Brain microvascular endothelial cell (primary cell): ENCODE measurements at regions of chr2 and their contacts with region 1.

Region 1: GRCh38 chr2:20097879-20098714 is 46.7 kb upstream of the LAPTM4A start:
- DNase-seq: peak; percentile 76
- H3K4me3 ChIP-seq: no peak overlapping the region
- H3K27ac ChIP-seq: no peak overlapping the region
- H3K27me3 ChIP-seq: no peaks in the 10 kb centered on the region
- CTCF ChIP-seq: peak; percentile 90

Region 2: DNA sequence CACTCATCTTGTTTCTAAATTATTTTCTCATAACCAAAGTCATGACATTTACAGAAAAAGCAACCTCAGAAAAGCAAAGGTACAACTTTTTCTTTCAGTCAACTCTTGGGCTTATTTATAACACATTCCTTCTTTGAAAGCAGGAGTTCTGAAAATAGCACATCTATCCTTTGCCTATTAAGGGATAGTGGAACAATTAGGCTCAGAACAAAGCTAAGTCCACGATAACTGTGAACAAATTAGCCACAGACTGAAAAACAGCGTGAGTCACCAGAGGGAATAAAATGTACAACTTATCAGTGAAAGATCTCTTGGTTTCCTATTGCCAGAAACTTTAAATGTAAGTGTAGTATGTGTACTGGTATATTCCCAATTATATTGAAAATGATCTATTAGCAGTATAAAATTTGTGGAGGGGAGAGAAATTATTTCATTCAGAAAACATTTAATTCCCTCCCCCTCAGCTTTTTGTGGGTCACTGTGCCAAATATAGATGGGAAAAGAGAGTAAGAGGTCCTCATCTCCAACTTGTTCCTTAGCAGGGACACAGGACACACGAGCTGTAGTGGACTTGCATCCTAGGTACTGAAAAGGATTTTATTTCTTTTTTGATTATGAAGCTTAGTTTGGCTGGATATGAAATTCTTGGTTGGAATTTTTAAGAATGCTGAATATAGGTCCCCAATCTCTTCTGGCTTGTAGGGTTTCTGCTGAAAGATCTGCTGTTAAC is 70.2 kb before region 1 on chr2:
- in situ Hi-C with region 1: loop called (anchors 10 kb)
- DNase-seq: no peak
- H3K4me3 ChIP-seq: no peak overlapping the region
- H3K27ac ChIP-seq: no peak overlapping the region
- H3K27me3 ChIP-seq: no peaks in the 10 kb centered on the region
- CTCF ChIP-seq: no peak